Posterior cingulate gyrus (tissue), 11 donors: ENCODE measurements at regions of chr12 and their contacts with region 1.

Region 1: GRCh38 chr12:92784795-92785562 is 82.2 kb downstream of the PLEKHG7 start:
- DNase-seq: no peak

Region 2: DNA sequence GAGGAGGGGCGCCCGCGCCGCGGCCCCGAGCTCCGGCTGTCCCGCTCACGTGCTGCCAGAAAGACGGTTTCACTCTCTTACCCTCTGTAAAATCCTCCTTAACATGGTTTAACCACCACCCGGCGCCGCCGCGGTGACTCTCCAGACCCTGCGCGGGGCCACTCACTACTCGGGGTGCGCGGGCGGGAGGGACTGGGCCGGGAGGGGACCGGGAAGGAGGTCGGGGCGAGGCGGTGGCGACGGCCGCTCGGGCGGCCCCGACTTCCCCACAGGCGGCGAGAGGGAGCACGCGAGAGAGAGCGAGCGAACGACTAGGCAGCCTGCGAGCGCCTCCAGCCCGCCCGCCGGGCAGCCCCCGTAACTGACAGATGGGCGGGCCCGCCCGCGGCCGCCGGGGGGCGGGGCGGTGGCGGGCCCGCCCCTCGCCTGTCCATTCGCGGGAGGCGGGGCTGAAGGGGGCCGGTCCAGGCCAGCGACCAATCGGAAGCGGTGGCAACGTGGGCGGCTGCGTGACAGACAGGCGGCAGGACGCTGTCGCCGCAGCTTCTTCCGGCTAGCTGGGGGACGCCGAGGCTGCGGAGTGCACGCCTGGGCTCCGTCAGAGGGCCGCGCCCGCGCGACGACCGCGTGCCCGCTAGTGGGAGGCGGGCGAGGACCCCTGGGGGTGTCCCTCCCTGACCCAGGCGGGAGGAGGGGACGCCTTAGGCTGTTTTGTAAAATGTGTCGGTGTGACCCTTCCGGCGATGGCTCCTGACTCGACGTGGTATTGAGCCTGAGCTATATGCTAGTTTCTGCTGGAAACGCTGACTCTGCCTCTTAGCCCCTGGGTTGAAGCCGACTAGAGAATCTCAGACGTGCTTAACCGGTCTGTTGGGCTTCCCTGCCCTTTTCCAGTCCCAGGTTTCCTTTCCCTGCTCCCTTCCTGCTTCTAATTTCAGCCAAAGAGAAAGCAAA is 144.3 kb after region 1 on chr12 and contains the start of gene EEA1:
- intact Hi-C with region 1: loop called (anchors 5 kb)
- DNase-seq: peak; percentile 93 to 100 (median 98)

Region 3: GRCh38 chr12:93002293-93003054 is 217.5 kb after region 1 on chr12:
- intact Hi-C with region 1: no loop called
- DNase-seq: no peak

Region 4: GRCh38 chr12:93390549-93391297 is 605.7 kb after region 1 on chr12:
- intact Hi-C with region 1: loop called (anchors 10 kb)
- DNase-seq: no peak

Region 5: GRCh38 chr12:93419388-93420034 is 634.5 kb after region 1 on chr12:
- intact Hi-C with region 1: loop called (anchors 10 kb)
- DNase-seq: no peak